CD4-positive, alpha-beta memory T cell (primary cell): ENCODE measurements at regions of chr9 and their contacts with region 1.

Region 1: GRCh38 chr9:126791406-126792151 is 13.3 kb upstream of the ZBTB43 start:
- DNase-seq: no peak
- H3K4me3 ChIP-seq: no peak overlapping the region
- H3K4me3 Mint-ChIP-seq: no peak overlapping the region
- H3K27ac ChIP-seq: no peak overlapping the region
- H3K27ac Mint-ChIP-seq: no peak overlapping the region
- H3K4me1 ChIP-seq: no peaks in the 10 kb centered on the region
- H3K4me1 Mint-ChIP-seq: no peaks in the 10 kb centered on the region
- H3K27me3 ChIP-seq: no peaks in the 10 kb centered on the region
- H3K27me3 Mint-ChIP-seq: peaks cover 26 to 34% of the 10 kb centered on the region in 2 donors

Region 2: GRCh38 chr9:126781186-126782052 is 10.2 kb before region 1 on chr9:
- CTCF ChIA-PET with region 1: interaction called, 15 read pairs
- POLR2A ChIA-PET with region 1: interaction called, 3 read pairs
- intact Hi-C with region 1: no loop called
- DNase-seq: peak; percentile 68 to 79 (median 76)
- H3K4me3 ChIP-seq: no peak overlapping the region
- H3K4me3 Mint-ChIP-seq: no peak overlapping the region
- H3K27ac ChIP-seq: no peak overlapping the region
- H3K27ac Mint-ChIP-seq: no peak overlapping the region
- H3K4me1 ChIP-seq: peaks cover 5% of the 10 kb centered on the region
- H3K4me1 Mint-ChIP-seq: peaks cover 0 to 4% (median 2%) of the 10 kb centered on the region in 4 donors
- H3K27me3 ChIP-seq: no peaks in the 10 kb centered on the region
- H3K27me3 Mint-ChIP-seq: peaks cover 11 to 23% of the 10 kb centered on the region in 2 donors